RWPE1 (cell line): ENCODE measurements at regions of chr3 and their contacts with region 1.

Region 1: DNA sequence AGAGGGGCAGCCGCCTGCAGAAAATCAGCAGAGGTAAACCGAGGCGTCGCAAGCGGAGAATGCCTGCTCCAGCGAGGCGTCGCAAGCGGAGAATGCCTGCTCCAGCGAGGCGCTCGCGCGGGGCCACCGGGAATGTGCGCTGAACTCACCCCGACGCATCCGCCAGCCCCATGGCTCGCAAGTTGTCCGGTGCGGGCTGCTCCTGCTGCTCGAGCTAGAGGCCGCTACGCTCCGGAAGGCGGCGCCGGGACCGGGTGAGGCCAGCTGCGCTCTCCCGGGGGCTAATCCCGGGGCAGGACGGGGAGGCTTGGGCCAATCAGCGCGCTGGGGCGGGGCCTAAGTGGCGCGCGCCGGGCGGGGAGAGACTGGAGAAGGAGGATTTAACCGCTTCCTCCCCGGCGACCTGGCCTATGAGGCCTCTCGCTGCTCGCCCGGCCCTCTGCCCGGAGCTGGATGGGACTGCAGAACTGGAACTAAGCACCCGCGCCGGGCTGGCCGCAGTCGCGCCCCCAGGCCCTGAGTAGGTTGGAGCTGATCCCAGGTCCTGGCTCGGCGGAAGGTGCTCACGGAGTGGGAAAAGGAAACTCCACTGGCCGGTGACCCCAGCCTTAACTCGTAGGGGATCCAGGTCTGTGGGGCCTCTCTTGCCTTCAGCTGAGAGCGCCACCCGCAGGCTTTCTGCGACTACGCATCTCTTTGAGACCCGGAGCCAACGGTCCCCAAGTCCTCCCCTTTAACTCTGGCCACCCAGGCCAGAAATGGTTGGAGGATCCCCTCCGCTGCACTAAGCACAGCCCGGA is at the start of gene SLC26A6:
- DNase-seq: peak; percentile 99
- H3K27ac ChIP-seq: peak within 1 kb of the TSS; percentile 89
- CTCF ChIP-seq: peak; percentile 72

Region 2: GRCh38 chr3:48623851-48624547 is 11.4 kb before region 1 on chr3:
- CTCF ChIA-PET with region 1: interaction called, 12 read pairs
- POLR2A ChIA-PET with region 1: no interaction called
- DNase-seq: no peak
- H3K27ac ChIP-seq: peak overlapping the region; percentile 89
- CTCF ChIP-seq: no peak

Region 3: GRCh38 chr3:48952510-48953118 is 317.2 kb after region 1 on chr3:
- CTCF ChIA-PET with region 1: no interaction called
- POLR2A ChIA-PET with region 1: no interaction called
- DNase-seq: no peak
- H3K27ac ChIP-seq: no peak overlapping the region
- CTCF ChIP-seq: no peak; the same call in 1 of the 2 replicates